Mammary epithelial cell (primary cell): ENCODE measurements at regions of chr12 and their contacts with region 1.

Region 1: GRCh38 chr12:75722714-75723200 is 211.3 kb upstream of the KRR1 start:
- DNase-seq: peak; percentile 85
- H3K4me3 ChIP-seq: no peak overlapping the region
- H3K27ac ChIP-seq: peak overlapping the region; percentile 88
- H3K4me1 ChIP-seq: peaks cover 59% of the 10 kb centered on the region
- H3K27me3 ChIP-seq: no peaks in the 10 kb centered on the region
- CTCF ChIP-seq: no peak

Region 2: GRCh38 chr12:75603475-75603874 is 119.3 kb before region 1 on chr12:
- CTCF ChIA-PET with region 1: no interaction called
- dilution Hi-C with region 1: no loop called
- in situ Hi-C with region 1: no loop called
- intact Hi-C with region 1: no loop called
- DNase-seq: peak; percentile 13
- H3K4me3 ChIP-seq: no peak overlapping the region
- H3K27ac ChIP-seq: no peak overlapping the region
- H3K4me1 ChIP-seq: peaks cover 3% of the 10 kb centered on the region
- H3K27me3 ChIP-seq: no peaks in the 10 kb centered on the region
- CTCF ChIP-seq: no peak

Region 3: GRCh38 chr12:75690296-75690955 is 32.3 kb before region 1 on chr12:
- CTCF ChIA-PET with region 1: no interaction called
- dilution Hi-C with region 1: no loop called
- in situ Hi-C with region 1: no loop called
- intact Hi-C with region 1: loop called (anchors 2 kb)
- DNase-seq: peak; percentile 99
- H3K4me3 ChIP-seq: no peak overlapping the region
- H3K27ac ChIP-seq: peak overlapping the region; percentile 97
- H3K4me1 ChIP-seq: peaks cover 21% of the 10 kb centered on the region
- H3K27me3 ChIP-seq: no peaks in the 10 kb centered on the region
- CTCF ChIP-seq: no peak

Region 4: DNA sequence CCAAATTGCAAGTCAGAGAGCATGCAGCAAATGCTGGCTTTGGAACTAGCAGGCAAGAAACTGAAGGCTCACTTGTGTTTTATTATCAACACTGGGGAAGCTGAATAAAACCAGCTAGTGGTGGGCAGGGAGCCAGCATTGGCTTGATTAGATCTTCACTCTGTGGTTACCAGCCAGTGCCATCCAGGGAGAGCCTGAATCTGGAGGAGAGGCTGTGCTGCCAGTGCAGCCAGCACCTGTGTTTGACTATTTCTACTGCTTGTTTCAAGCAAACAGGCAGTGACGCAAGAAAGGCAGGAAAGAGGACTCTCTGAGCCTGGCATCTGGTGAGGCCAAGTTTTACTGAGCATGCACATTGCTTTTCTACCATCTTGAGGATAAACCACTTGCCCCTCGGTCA is 61.8 kb after region 1 on chr12:
- CTCF ChIA-PET with region 1: no interaction called
- dilution Hi-C with region 1: no loop called
- in situ Hi-C with region 1: no loop called
- intact Hi-C with region 1: loop called (anchors 10 kb)
- DNase-seq: peak; percentile 91
- H3K4me3 ChIP-seq: no peak overlapping the region
- H3K27ac ChIP-seq: peak overlapping the region; percentile 2
- H3K4me1 ChIP-seq: peaks cover 56% of the 10 kb centered on the region
- H3K27me3 ChIP-seq: no peaks in the 10 kb centered on the region
- CTCF ChIP-seq: no peak

Region 5: GRCh38 chr12:75814851-75815754 is 92.3 kb after region 1 on chr12:
- CTCF ChIA-PET with region 1: no interaction called
- dilution Hi-C with region 1: no loop called
- in situ Hi-C with region 1: no loop called
- intact Hi-C with region 1: loop called (anchors 5 kb)
- DNase-seq: peak; percentile 66
- H3K4me3 ChIP-seq: no peak overlapping the region
- H3K27ac ChIP-seq: peak overlapping the region; percentile 60
- H3K4me1 ChIP-seq: peaks cover 23% of the 10 kb centered on the region
- H3K27me3 ChIP-seq: no peaks in the 10 kb centered on the region
- CTCF ChIP-seq: no peak

Region 6: DNA sequence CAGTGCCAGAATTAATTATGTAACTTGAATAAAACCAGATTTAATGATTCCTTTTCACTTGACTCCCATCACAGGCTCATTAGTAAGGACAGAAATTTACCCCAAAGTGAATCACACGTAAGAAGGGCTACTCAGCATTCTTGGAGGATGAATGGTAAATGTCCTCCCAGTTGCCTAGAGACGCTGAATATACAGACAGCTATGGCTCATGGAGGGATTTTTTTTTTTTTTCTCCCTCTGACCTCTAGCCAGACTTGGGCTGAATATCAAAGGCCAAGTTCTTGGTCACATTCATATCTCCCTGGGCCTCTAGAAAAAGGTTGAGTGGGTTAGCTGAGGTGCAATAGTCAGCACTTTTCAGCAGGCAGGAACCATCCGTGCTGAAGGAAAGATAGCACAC is 231.3 kb after region 1 on chr12:
- CTCF ChIA-PET with region 1: no interaction called
- dilution Hi-C with region 1: no loop called
- in situ Hi-C with region 1: no loop called
- intact Hi-C with region 1: loop called (anchors 10 kb)
- DNase-seq: peak; percentile 95
- H3K4me3 ChIP-seq: no peak overlapping the region
- H3K27ac ChIP-seq: peak overlapping the region; percentile 94
- H3K4me1 ChIP-seq: peaks cover 22% of the 10 kb centered on the region
- H3K27me3 ChIP-seq: no peaks in the 10 kb centered on the region
- CTCF ChIP-seq: no peak